ENCODE measurements at regions of chr17 and their contacts with region 1.

Region 1: GRCh38 chr17:10295728-10296343 is 77.0 kb downstream of the MYH13 start:
- DNase-seq: no peak
- H3K4me3 ChIP-seq: no peak overlapping the region
- H3K27ac ChIP-seq: no peak overlapping the region
- H3K4me1 ChIP-seq: no peaks in the 10 kb centered on the region
- H3K27me3 ChIP-seq: peaks cover 0 to 4% of the 10 kb centered on the region in 2 donors
- CTCF ChIP-seq: peak; percentile 27 to 35

Region 2: DNA sequence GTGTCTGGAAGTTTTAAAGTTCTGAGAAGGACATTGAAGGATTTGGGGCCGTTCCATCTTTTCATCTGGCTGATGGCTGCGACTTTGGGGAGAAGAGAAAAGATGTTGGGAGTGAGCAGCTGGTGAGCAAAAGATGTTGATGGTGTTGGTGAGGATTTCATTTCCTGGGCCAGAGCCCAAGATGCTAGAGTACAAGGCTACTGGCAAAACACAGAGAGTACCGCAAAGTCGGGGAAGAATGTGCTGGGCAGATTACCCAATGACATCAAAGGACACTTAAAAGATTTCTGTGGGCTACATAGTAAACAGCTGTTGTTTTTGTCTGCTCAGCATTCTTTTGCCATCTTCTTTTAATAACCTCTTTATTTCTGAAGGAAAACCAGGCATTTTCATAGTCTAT is 48.0 kb before region 1 on chr17:
- intact Hi-C with region 1: loop called (anchors 5 kb)
- DNase-seq: no peak
- H3K4me3 ChIP-seq: no peak overlapping the region
- H3K27ac ChIP-seq: no peak overlapping the region
- H3K4me1 ChIP-seq: no peaks in the 10 kb centered on the region
- H3K27me3 ChIP-seq: no peaks in the 10 kb centered on the region
- CTCF ChIP-seq: no peak

Measured in tibial artery (tissue), 4 donors.